ENCODE measurements at regions of chr2 and their contacts with region 1.

Region 1: DNA sequence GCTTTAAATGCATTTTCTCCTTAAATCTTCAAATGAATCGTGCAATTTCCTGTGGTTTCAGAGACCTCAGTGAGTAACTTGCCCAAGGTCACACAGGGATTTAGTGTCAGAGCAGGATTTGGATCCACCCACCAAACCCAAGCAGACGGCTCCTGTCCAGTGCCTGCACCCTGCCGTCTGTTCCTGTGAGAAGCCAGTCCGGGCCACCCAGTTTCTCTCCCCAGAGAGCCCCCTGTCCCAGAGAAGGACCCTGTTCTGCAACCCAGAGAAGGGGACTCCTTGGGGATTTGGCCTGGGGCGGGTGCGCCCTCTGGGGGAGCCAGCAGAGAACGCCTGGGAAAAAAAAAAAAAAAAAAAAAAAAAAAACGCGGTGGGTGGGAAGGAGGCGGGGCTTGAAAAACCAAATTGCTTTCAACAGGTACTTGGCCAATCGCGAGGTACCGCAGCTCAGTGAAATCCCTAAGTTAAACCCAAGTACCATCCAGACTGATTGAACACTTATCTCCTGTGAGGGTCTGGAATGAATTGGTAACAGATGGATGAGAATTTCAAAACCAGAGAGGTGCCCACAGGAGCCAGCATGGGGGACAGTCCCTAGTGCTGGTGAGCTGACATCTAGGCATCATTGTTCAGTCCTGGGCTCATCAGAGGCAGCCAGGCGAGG is 30.9 kb upstream of the REEP1 start:
- DNase-seq: peak; percentile 73
- ATAC-seq: peak; percentile 87
- H3K4me3 Mint-ChIP-seq: peak overlapping the region; percentile 50
- H3K27ac Mint-ChIP-seq: peak overlapping the region; percentile 61; the same call in 1 of the 2 replicates
- H3K4me1 Mint-ChIP-seq: peaks cover 9% of the 10 kb centered on the region
- H3K27me3 Mint-ChIP-seq: peaks cover 6% of the 10 kb centered on the region; the same call in 1 of the 2 replicates
- CTCF ChIP-seq: no peak; the same call in none of the 2 replicates

Region 2: DNA sequence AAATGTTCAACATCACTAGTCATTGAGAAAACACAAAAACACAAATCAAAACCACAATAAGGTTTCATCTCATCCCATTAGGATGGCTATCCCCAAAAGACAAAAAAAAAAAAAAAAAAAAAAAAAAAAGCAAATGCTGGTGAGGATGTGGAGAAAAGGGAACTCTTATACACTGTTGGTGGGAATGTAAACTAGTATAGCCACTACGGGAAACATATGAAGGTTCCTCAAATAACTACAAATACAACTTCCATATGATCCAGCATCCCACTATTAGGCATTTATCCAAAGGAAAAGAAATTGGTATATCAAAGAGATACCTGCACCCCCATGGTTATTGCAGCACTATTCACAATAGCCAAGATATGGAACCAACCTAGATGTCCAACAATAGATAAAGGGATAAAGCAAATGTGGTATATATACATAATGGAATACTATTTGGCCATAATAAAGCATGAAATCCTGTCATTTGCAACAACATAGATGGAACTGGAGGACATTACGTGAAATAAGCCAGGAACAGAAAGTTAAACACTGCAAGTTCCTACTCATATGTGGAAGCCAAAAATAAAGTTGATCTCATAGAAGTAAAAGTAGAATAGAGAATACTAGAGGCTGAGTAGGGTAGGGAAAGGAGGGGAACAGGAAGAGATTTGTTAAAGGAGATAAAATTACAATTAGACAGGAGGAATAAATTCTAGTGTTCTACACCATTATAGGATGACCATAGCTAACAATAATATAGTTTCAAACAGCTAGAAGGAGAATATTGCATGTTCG is 271.0 kb before region 1 on chr2:
- CTCF ChIA-PET with region 1: no interaction called
- POLR2A ChIA-PET with region 1: no interaction called
- DNase-seq: no peak
- ATAC-seq: no peak
- H3K4me3 Mint-ChIP-seq: no peak overlapping the region
- H3K27ac Mint-ChIP-seq: no peak overlapping the region
- H3K4me1 Mint-ChIP-seq: no peaks in the 10 kb centered on the region
- H3K27me3 Mint-ChIP-seq: no peaks in the 10 kb centered on the region
- CTCF ChIP-seq: no peak

Region 3: DNA sequence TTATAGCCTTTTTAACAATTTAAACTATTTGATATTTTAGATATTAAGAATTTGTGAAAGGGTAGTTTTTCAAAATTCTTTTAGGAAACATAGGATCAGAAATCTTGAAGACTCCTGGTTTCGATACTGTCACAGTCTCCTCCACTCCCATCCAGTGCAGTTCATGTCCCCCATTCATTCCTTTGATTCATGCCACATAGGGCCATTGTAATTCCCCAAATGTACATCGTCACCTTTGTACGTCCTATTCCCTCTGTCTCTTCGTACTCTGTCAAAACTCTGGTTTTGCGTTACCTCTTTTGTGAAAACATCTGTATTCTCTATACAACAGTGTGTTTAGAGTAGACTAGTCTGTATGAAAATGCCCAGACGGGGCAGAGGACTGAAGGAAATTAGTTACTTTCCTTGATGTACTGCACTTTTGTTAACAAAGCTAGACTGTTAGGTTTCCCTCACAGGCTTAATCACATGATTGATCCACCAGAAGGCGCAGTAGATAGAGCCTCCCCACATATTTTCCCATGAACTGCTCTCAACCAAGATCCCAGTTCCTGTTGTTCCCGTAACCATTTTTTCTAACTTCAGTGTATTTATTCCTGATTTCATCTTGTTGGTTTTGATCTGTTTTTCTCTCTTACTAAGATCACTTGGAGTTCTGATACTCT is 166.5 kb before region 1 on chr2:
- CTCF ChIA-PET with region 1: interaction called, 10 read pairs
- POLR2A ChIA-PET with region 1: no interaction called
- DNase-seq: no peak
- ATAC-seq: 0 out of 2 replicates have a peak, but pooled peaks have one; percentile 29
- H3K4me3 Mint-ChIP-seq: peak overlapping the region; percentile 31
- H3K27ac Mint-ChIP-seq: peak overlapping the region; percentile 71
- H3K4me1 Mint-ChIP-seq: peaks cover 32% of the 10 kb centered on the region
- H3K27me3 Mint-ChIP-seq: no peaks in the 10 kb centered on the region
- CTCF ChIP-seq: no peak

Region 4: DNA sequence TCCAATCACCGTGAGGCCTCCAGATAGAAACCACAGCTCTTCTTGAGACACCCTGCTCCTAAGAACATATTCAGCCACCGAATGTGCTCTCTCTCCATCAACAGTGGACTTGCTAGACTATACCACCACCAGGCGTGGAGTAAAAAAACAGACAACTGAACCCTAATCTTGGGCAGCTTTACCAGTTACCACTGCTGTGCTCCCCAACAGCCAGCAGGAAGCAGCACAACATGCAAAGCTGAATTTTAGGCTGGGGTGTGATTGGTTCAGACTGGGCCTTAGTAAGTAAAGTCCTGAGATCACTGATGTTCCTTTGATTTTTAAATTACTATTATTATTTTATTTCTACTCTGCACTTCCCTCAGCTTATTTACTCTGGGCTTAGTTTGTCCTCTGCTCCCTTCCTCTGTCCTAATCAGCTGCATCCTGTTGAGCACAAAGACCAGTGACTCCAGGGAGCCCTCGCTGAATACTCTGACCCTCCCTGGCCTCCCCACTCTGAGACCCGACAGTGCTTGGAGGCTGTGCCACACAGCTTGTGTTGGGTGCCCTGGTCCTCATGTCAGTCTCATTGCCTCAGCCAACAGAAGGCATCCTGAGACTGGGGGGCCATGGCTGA is 147.1 kb before region 1 on chr2:
- CTCF ChIA-PET with region 1: interaction called, 52 read pairs
- POLR2A ChIA-PET with region 1: interaction called, 3 read pairs
- DNase-seq: peak; percentile 67
- ATAC-seq: peak; percentile 82
- H3K4me3 Mint-ChIP-seq: no peak overlapping the region
- H3K27ac Mint-ChIP-seq: no peak overlapping the region
- H3K4me1 Mint-ChIP-seq: peaks cover 28% of the 10 kb centered on the region
- H3K27me3 Mint-ChIP-seq: no peaks in the 10 kb centered on the region
- CTCF ChIP-seq: peak; percentile 85

Region 5: DNA sequence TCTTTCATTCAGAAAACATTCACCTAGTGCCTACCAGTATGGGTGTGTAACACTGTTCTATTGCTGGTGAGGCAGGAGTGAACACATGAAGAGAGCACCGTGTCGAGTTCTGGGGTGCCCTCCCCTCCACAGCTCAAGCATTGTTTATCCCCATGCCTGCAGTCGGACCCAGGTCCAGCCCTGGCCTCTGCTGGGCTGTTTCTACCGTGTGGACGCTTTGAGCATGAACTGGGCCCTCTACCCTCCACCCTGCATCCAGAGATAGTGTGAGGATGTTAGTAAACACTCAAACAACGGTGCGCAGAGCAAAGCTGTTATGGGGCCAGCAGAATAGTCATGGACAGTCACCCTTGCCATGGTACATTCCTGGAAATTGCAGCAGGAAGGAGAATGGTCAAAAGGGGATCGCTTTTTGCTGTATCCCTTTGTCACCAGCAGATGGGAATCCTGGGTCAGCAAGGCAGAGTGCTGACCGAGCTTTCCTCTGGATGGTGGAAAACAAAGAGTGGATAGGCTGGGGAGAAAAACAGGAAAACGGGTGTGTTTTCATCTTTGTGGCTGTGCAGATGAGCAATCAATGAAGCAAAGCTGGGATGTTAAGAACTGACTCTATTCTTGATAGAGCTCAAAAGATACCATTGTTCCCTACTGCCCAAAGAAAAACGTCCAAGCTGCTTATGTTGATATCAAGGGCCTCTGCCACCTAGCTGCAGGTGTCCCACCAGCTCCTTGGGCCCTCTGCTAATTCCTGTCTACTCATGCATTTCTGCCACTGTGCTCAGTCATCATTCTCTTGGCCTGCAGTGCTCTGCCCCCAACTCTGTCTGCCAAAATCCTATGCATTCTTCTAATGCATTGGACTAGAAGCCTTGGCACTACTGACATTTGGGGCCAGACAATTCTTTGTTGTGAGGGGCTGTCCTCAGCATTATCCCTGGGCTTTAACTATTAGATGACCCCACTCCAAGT is 69.6 kb before region 1 on chr2:
- CTCF ChIA-PET with region 1: interaction called, 15 read pairs
- POLR2A ChIA-PET with region 1: no interaction called
- DNase-seq: peak; percentile 20
- ATAC-seq: peak; percentile 75
- H3K4me3 Mint-ChIP-seq: no peak overlapping the region
- H3K27ac Mint-ChIP-seq: no peak overlapping the region
- H3K4me1 Mint-ChIP-seq: peaks cover 9% of the 10 kb centered on the region; the same call in 1 of the 2 replicates
- H3K27me3 Mint-ChIP-seq: no peaks in the 10 kb centered on the region
- CTCF ChIP-seq: no peak

Region 6: DNA sequence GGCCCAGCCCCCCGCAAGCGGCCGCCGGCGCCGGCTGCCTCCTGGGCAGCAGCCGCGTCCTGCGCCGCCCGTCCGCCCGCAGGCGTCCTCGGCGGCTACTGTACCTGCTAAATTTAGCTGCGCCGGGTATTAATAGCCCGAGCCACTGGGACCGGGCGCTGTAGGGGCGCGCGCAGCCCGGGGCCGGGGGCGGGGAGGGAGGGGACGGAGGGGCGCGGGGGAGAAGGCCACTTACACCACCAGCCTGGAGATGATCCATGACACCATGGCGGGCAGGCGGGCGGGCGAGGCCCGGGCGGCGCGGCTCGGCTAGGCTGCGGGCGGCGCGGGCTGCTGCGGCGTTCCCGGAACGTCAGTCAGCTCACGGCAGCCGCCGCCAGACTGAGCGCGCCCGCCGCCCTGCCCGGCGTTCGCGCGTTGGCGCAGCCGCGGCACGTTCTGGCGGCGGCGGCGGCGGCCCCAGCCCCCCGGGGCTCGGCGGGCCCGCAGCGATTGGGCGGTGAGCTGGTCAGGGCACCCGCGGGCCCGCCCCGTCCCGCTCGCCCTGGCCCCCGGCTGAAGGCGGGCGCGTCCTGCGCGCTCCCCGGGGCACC is 31.0 kb before region 1 on chr2 and contains the start of gene REEP1:
- CTCF ChIA-PET with region 1: interaction called, 14 read pairs
- POLR2A ChIA-PET with region 1: no interaction called
- DNase-seq: peak; percentile 49
- ATAC-seq: peak; percentile 79
- H3K4me3 Mint-ChIP-seq: peak within 1 kb of the TSS; percentile 84
- H3K27ac Mint-ChIP-seq: no peak within 1 kb of the TSS
- H3K4me1 Mint-ChIP-seq: peaks cover 14% of the 10 kb centered on the region
- H3K27me3 Mint-ChIP-seq: peaks cover 74% of the 10 kb centered on the region
- CTCF ChIP-seq: no peak
- total RNA-seq, gene REEP1: 0.53 to 1.9 TPM (median 0.89 TPM) in 3 replicates

Region 7: GRCh38 chr2:86440631-86441391 is 72.5 kb after region 1 on chr2 and contains the start of gene KDM3A:
- CTCF ChIA-PET with region 1: interaction called, 10 read pairs
- POLR2A ChIA-PET with region 1: no interaction called
- DNase-seq: peak; percentile 99
- ATAC-seq: peak; percentile 93
- H3K4me3 Mint-ChIP-seq: peak within 1 kb of the TSS; percentile 88
- H3K27ac Mint-ChIP-seq: peak within 1 kb of the TSS; percentile 99
- H3K4me1 Mint-ChIP-seq: peaks cover 21% of the 10 kb centered on the region
- H3K27me3 Mint-ChIP-seq: peaks cover 33% of the 10 kb centered on the region
- CTCF ChIP-seq: no peak
- total RNA-seq, gene KDM3A: 34.2 to 46.2 TPM (median 45.4 TPM) in 3 replicates